ENCODE measurements at regions of chr3 and their contacts with region 1.

Region 1: GRCh38 chr3:184952671-184953070 is 140.7 kb downstream of the VPS8 start:
- DNase-seq: no peak
- ATAC-seq: no peak
- H3K4me3 ChIP-seq: no peak overlapping the region
- H3K4me3 Mint-ChIP-seq: no peak overlapping the region
- H3K27ac ChIP-seq: no peak overlapping the region
- H3K27ac Mint-ChIP-seq: no peak overlapping the region
- H3K4me1 ChIP-seq: no peaks in the 10 kb centered on the region
- H3K4me1 Mint-ChIP-seq: peaks cover 0 to 11% (median 3%) of the 10 kb centered on the region in 7 donors
- H3K27me3 ChIP-seq: no peaks in the 10 kb centered on the region
- H3K27me3 Mint-ChIP-seq: no peaks in the 10 kb centered on the region

Region 2: DNA sequence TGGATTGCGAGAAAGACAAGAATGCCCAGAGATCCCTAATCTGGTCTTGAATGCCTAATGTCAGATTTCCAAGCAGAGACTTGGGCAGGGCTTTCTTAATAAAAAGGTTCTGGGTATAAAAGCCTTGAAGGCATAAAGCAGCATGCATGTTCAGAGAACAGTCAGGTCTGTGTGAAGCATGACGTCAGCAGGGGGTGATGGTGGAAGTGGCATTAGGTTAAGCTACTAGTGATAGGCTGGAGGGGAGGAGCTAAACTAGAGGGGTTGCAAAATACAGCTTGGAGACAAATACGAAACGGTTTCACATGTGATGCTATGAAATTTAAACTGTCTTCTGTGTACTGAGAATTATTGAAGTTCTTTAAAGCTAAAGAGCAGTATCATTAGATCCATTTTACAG is 15.1 kb before region 1 on chr3:
- CTCF ChIA-PET with region 1: no interaction called
- POLR2A ChIA-PET with region 1: no interaction called
- intact Hi-C with region 1: loop called in 1 of 2 experiments (anchors 2 kb)
- DNase-seq: no peak
- ATAC-seq: no peak
- H3K4me3 ChIP-seq: no peak overlapping the region
- H3K4me3 Mint-ChIP-seq: no peak overlapping the region
- H3K27ac ChIP-seq: no peak overlapping the region
- H3K27ac Mint-ChIP-seq: peak overlapping the region in 1 of 9 donors; percentile 50
- H3K4me1 ChIP-seq: no peaks in the 10 kb centered on the region
- H3K4me1 Mint-ChIP-seq: peaks cover 0 to 11% (median 0%) of the 10 kb centered on the region in 7 donors
- H3K27me3 ChIP-seq: no peaks in the 10 kb centered on the region
- H3K27me3 Mint-ChIP-seq: no peaks in the 10 kb centered on the region

Region 3: DNA sequence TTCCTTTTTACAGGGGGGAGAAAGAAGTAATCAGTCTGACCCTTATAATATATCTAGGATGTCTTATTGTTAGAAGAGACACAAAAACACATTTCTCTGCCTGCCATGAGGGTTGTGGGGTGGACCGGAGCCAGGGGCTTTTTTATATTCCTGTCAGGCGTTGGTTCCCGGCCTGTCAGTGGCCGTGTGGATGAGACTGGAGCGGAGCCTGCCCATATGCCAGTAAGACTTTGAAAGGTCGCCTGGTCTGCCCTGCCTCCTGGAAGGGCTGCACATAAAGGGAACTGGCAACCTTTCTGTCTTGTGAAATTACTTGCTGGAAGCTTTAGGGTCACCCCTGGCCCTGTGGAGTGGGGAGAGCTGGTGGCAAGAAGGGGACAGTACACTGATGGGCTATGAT is 445.0 kb after region 1 on chr3:
- CTCF ChIA-PET with region 1: no interaction called
- POLR2A ChIA-PET with region 1: no interaction called
- intact Hi-C with region 1: no loop called
- DNase-seq: no peak
- ATAC-seq: no peak
- H3K4me3 ChIP-seq: no peak overlapping the region
- H3K4me3 Mint-ChIP-seq: no peak overlapping the region
- H3K27ac ChIP-seq: no peak overlapping the region
- H3K27ac Mint-ChIP-seq: no peak overlapping the region
- H3K4me1 ChIP-seq: no peaks in the 10 kb centered on the region
- H3K4me1 Mint-ChIP-seq: no peaks in the 10 kb centered on the region
- H3K27me3 ChIP-seq: no peaks in the 10 kb centered on the region
- H3K27me3 Mint-ChIP-seq: peaks cover 0 to 5% (median 0%) of the 10 kb centered on the region in 5 donors